ENCODE measurements at regions of chr14 and their contacts with region 1.

Region 1: GRCh38 chr14:43795600-43796228 is 711.4 kb downstream of the FSCB start:
- DNase-seq: peak; percentile 24 to 65
- H3K4me3 ChIP-seq: no peak overlapping the region
- H3K4me1 ChIP-seq: peaks cover 9% of the 10 kb centered on the region; the same call in 1 of the 2 replicates
- H3K27me3 ChIP-seq: no peaks in the 10 kb centered on the region

Region 2: GRCh38 chr14:43503590-43503907 is 292.2 kb before region 1 on chr14:
- in situ Hi-C with region 1: loop called (anchors 25 kb)
- DNase-seq: peak in 1 of 2 experiments; percentile 67
- H3K4me3 ChIP-seq: no peak overlapping the region
- H3K4me1 ChIP-seq: peaks cover 16% of the 10 kb centered on the region
- H3K27me3 ChIP-seq: no peaks in the 10 kb centered on the region